B cell (primary cell): ENCODE measurements at regions of chr22 and their contacts with region 1.

Region 1: DNA sequence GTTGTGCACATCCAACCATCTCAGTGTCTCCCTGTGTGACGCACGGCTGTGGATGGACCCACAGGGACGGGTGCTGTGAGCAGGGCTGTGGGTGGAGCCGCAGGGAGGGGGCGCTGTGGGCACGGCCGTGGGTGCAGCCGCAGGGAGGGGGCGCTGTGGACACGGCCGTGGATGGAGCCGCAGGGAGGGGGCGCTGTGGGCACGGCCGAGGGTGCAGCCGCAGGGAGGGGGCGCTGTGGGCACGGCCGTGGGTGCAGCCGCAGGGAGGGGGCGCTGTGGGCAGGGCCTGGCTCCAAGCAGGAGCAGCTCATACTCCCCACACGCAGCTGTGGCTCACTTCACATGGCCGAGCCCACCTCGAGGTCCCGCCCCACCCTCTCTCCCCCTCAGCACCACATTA is 6.0 kb upstream of the MAPK11 start:
- DNase-seq: peak; percentile 86
- ATAC-seq: peak; percentile 71
- H3K4me3 ChIP-seq: no peak overlapping the region
- H3K4me3 Mint-ChIP-seq: no peak overlapping the region
- H3K27ac ChIP-seq: no peak overlapping the region
- H3K27ac Mint-ChIP-seq: peak overlapping the region; percentile 26
- H3K4me1 ChIP-seq: peaks cover 6 to 12% of the 10 kb centered on the region in 2 donors
- H3K4me1 Mint-ChIP-seq: peaks cover 4% of the 10 kb centered on the region
- H3K27me3 ChIP-seq: peaks cover 0 to 8% (median 1%) of the 10 kb centered on the region in 4 experiments
- H3K27me3 Mint-ChIP-seq: no peaks in the 10 kb centered on the region
- CTCF ChIP-seq: peak; percentile 64

Region 2: DNA sequence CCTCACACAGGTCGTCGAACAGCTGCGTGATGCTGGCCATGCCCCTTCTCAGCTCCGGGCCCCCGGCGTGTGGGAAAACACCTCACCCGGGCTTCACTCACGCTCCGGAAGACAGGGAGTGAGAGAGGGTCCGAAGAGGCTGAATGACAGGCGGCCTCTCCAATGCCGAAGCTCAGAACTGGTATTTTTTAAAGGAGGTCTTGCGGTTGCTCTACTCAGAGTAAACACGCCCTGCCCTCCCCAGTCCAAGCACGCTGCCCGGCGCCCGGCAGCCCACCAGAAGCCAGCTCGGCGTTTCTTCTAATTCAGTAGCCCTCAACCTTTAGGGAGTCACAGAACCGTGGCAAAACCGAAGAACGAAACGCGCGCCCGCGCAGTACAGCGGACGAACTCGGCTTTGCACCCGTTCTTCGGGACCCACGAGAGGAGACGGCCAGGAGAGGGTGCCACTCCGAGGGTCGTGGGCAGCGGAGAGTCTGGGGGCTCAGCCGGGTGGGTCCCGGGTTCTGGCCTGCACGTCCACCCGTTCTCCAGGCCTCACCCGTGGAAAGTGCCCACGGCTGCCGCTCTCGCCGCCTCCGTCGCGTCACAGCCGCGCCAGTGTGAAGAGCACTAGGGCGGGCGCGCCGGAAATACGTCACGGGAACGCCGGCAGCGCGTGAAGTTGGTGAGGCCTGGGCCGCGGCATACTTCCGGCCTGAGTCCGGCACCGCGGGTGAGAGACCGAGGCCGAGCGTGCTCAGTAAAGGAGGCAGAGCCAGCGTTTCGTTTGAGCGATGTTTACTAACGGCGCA is 31.5 kb before region 1 on chr22 and contains the start of gene TUBGCP6:
- CTCF ChIA-PET with region 1: interaction called, 4 read pairs
- POLR2A ChIA-PET with region 1: no interaction called
- intact Hi-C with region 1: loop called (anchors 2 kb)
- DNase-seq: peak; percentile 96
- ATAC-seq: peak; percentile 81
- H3K4me3 ChIP-seq: peak within 1 kb of the TSS; percentile 65 to 99 (median 90)
- H3K4me3 Mint-ChIP-seq: peak within 1 kb of the TSS; percentile 96
- H3K27ac ChIP-seq: peak within 1 kb of the TSS; percentile 91 to 96
- H3K27ac Mint-ChIP-seq: peak within 1 kb of the TSS; percentile 99
- H3K4me1 ChIP-seq: peaks cover 33 to 66% of the 10 kb centered on the region in 2 donors
- H3K4me1 Mint-ChIP-seq: peaks cover 40% of the 10 kb centered on the region
- H3K27me3 ChIP-seq: no peaks in the 10 kb centered on the region
- H3K27me3 Mint-ChIP-seq: no peaks in the 10 kb centered on the region
- CTCF ChIP-seq: no peak
- total RNA-seq, gene TUBGCP6: 137 and 139 TPM in 2 replicates

Region 3: GRCh38 chr22:50250555-50251476 is 25.3 kb before region 1 on chr22 and contains the start of gene HDAC10:
- CTCF ChIA-PET with region 1: interaction called, 6 read pairs
- POLR2A ChIA-PET with region 1: no interaction called
- intact Hi-C with region 1: loop called (anchors 2 kb)
- DNase-seq: peak; percentile 85
- ATAC-seq: peak; percentile 84
- H3K4me3 ChIP-seq: peak within 1 kb of the TSS; percentile 56 to 81 (median 79)
- H3K4me3 Mint-ChIP-seq: peak within 1 kb of the TSS; percentile 86
- H3K27ac ChIP-seq: peak within 1 kb of the TSS; percentile 41 to 49
- H3K27ac Mint-ChIP-seq: peak within 1 kb of the TSS; percentile 76
- H3K4me1 ChIP-seq: peaks cover 15 to 44% of the 10 kb centered on the region in 2 donors
- H3K4me1 Mint-ChIP-seq: peaks cover 24% of the 10 kb centered on the region
- H3K27me3 ChIP-seq: no peaks in the 10 kb centered on the region
- H3K27me3 Mint-ChIP-seq: no peaks in the 10 kb centered on the region
- CTCF ChIP-seq: no peak
- total RNA-seq, gene HDAC10: 120 and 136 TPM in 2 replicates

Region 4: DNA sequence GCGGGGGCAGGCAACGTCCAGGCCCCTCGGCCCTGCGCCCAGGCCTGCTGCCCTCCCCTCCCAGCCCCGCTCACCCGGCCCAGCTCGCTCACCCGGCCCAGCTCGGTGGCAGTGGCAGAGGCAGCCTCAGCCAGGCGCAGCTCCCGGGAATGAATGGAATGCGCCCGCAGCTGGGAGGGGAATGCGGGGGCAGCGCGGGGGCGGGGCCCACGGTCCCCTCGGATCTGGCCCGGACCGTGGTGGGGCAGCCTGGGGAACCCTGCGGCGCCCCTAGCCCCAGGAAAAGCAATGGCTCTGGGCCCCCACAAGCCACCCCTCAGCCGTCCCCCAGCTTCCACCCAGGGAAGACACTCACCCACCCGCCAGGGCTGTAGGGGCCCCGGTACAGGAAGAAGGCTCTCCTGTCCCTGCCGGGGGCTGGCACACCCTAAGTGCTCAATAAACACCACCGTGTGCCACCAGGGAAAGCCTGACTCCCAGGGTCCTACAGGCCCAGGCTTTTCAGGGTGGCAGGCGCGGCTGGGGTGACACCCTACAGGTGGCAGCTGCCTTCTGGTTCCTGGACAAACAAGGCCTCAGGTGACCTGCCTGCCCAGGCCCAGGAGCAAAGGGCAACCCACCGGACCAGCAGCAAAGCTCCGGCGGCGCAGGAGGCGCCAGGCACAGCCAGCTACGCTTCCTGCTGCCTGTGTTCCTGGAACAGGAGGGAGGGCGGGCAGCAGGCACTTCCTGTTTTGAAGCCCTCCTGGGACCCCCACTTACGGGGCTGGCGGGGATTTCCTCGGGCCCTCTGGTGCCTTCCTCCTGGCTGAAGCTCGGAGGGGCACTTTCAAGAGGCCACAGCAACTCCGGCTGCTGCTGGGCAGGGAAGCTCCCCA is 17.5 kb after region 1 on chr22:
- CTCF ChIA-PET with region 1: interaction called, 11 read pairs
- POLR2A ChIA-PET with region 1: interaction called, 6 read pairs
- intact Hi-C with region 1: no loop called
- DNase-seq: peak; percentile 73
- ATAC-seq: peak; percentile 58
- H3K4me3 ChIP-seq: peak overlapping the region in 1 of 5 experiments; percentile 33
- H3K4me3 Mint-ChIP-seq: peak overlapping the region; percentile 64
- H3K27ac ChIP-seq: no peak overlapping the region
- H3K27ac Mint-ChIP-seq: peak overlapping the region; percentile 46
- H3K4me1 ChIP-seq: peaks cover 37 to 44% of the 10 kb centered on the region in 2 donors
- H3K4me1 Mint-ChIP-seq: peaks cover 41% of the 10 kb centered on the region
- H3K27me3 ChIP-seq: peaks cover 0 to 32% (median 12%) of the 10 kb centered on the region in 4 experiments
- H3K27me3 Mint-ChIP-seq: peaks cover 17% of the 10 kb centered on the region
- CTCF ChIP-seq: no peak

Region 5: GRCh38 chr22:50301581-50302541 is 25.7 kb after region 1 on chr22:
- CTCF ChIA-PET with region 1: interaction called, 19 read pairs
- POLR2A ChIA-PET with region 1: interaction called, 11 read pairs
- intact Hi-C with region 1: loop called (anchors 2 kb)
- DNase-seq: peak; percentile 74
- ATAC-seq: peak; percentile 14
- H3K4me3 ChIP-seq: no peak overlapping the region
- H3K4me3 Mint-ChIP-seq: peak overlapping the region; percentile 81
- H3K27ac ChIP-seq: no peak overlapping the region
- H3K27ac Mint-ChIP-seq: peak overlapping the region; percentile 80
- H3K4me1 ChIP-seq: peaks cover 73 to 79% of the 10 kb centered on the region in 2 donors
- H3K4me1 Mint-ChIP-seq: peaks cover 62% of the 10 kb centered on the region
- H3K27me3 ChIP-seq: peaks cover 0 to 28% (median 10%) of the 10 kb centered on the region in 4 experiments
- H3K27me3 Mint-ChIP-seq: peaks cover 13% of the 10 kb centered on the region
- CTCF ChIP-seq: no peak

Region 6: GRCh38 chr22:50306753-50307749 is 30.9 kb after region 1 on chr22 and contains the start of gene PLXNB2:
- CTCF ChIA-PET with region 1: interaction called, 19 read pairs
- POLR2A ChIA-PET with region 1: interaction called, 11 read pairs
- intact Hi-C with region 1: no loop called
- DNase-seq: peak; percentile 62
- ATAC-seq: peak; percentile 42
- H3K4me3 ChIP-seq: peak within 1 kb of the TSS; percentile 7 to 58 (median 45)
- H3K4me3 Mint-ChIP-seq: peak within 1 kb of the TSS; percentile 84
- H3K27ac ChIP-seq: no peak within 1 kb of the TSS
- H3K27ac Mint-ChIP-seq: peak within 1 kb of the TSS; percentile 87
- H3K4me1 ChIP-seq: peaks cover 65 to 75% of the 10 kb centered on the region in 2 donors
- H3K4me1 Mint-ChIP-seq: peaks cover 44% of the 10 kb centered on the region
- H3K27me3 ChIP-seq: peaks cover 0 to 28% (median 7%) of the 10 kb centered on the region in 4 experiments
- H3K27me3 Mint-ChIP-seq: peaks cover 5% of the 10 kb centered on the region
- CTCF ChIP-seq: no peak
- total RNA-seq, gene PLXNB2: 30.3 and 31.4 TPM in 2 replicates

Region 7: DNA sequence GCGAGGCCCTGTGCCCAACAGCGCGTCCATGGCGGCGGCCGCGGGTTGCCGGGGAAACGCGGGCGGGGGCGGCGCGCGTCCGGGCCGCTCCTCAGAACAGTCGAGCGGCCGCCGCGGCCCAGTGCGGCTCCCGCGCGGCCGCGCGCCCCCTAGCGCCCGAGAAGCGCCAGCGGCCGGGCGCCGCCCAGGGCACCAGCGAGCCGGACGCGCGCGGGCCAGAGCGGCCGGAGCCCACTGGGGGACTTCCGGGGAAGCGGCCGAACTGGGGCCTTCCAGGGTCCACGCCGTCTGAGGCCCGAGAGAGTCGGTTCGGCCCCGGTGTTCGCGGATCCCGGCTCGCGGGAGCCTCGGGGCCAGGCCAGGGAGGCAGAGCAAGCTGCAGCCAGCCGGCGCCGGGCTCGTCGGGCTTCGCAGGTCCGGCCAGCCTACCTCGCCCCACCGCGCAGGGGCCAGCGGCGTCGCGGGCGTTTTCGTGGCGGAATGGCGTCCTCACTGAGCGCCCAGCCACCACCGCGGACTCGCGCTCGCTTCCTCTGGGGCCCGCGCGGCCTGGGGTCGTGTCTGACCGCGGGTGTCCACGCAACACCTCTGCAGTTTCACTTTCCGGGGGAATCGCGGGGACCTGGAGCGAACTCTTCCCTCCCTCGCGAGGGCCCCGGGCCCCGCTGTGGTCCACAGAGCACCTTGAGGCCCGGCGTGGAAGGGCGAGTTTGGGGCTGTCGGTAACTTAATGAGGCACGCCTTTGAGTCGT is 51.0 kb after region 1 on chr22 and contains the start of gene DENND6B:
- CTCF ChIA-PET with region 1: interaction called, 67 read pairs
- POLR2A ChIA-PET with region 1: interaction called, 6 read pairs
- intact Hi-C with region 1: loop called (anchors 1 kb)
- DNase-seq: peak; percentile 86
- ATAC-seq: peak; percentile 94
- H3K4me3 ChIP-seq: peak within 1 kb of the TSS in 4 of 5 experiments; percentile 51 to 81 (median 72)
- H3K4me3 Mint-ChIP-seq: peak within 1 kb of the TSS; percentile 90
- H3K27ac ChIP-seq: peak within 1 kb of the TSS; percentile 24 to 76
- H3K27ac Mint-ChIP-seq: peak within 1 kb of the TSS; percentile 90
- H3K4me1 ChIP-seq: peaks cover 8 to 13% of the 10 kb centered on the region in 2 donors
- H3K4me1 Mint-ChIP-seq: peaks cover 21% of the 10 kb centered on the region
- H3K27me3 ChIP-seq: peaks cover 0 to 6% (median 0%) of the 10 kb centered on the region in 4 experiments
- H3K27me3 Mint-ChIP-seq: no peaks in the 10 kb centered on the region
- CTCF ChIP-seq: peak; percentile 67
- total RNA-seq, gene DENND6B: 10.3 and 10.6 TPM in 2 replicates